ENCODE measurements at regions of chr11 and their contacts with region 1.

Region 1: GRCh38 chr11:108697872-108698473 is 33.1 kb downstream of the DDX10 start:
- DNase-seq: peak; percentile 75 to 91 (median 88)
- H3K4me3 ChIP-seq: no peak overlapping the region
- H3K27ac ChIP-seq: no peak overlapping the region
- H3K4me1 ChIP-seq: no peaks in the 10 kb centered on the region
- H3K27me3 ChIP-seq: no peaks in the 10 kb centered on the region

Region 2: GRCh38 chr11:108494182-108494581 is 203.8 kb before region 1 on chr11:
- CTCF ChIA-PET with region 1: no interaction called
- POLR2A ChIA-PET with region 1: no interaction called
- DNase-seq: no peak
- H3K4me3 ChIP-seq: no peak overlapping the region
- H3K27ac ChIP-seq: no peak overlapping the region
- H3K4me1 ChIP-seq: peaks cover 0 to 20% (median 10%) of the 10 kb centered on the region in 4 experiments
- H3K27me3 ChIP-seq: no peaks in the 10 kb centered on the region

Region 3: GRCh38 chr11:109697140-109697843 is 999.3 kb after region 1 on chr11:
- CTCF ChIA-PET with region 1: interaction called, 24 read pairs
- POLR2A ChIA-PET with region 1: no interaction called
- DNase-seq: peak; percentile 20 to 48 (median 36)
- H3K4me3 ChIP-seq: no peak overlapping the region
- H3K27ac ChIP-seq: no peak overlapping the region
- H3K4me1 ChIP-seq: no peaks in the 10 kb centered on the region
- H3K27me3 ChIP-seq: no peaks in the 10 kb centered on the region